PC-9 (cell line): ENCODE measurements at regions of chr14 and their contacts with region 1.

Region 1: DNA sequence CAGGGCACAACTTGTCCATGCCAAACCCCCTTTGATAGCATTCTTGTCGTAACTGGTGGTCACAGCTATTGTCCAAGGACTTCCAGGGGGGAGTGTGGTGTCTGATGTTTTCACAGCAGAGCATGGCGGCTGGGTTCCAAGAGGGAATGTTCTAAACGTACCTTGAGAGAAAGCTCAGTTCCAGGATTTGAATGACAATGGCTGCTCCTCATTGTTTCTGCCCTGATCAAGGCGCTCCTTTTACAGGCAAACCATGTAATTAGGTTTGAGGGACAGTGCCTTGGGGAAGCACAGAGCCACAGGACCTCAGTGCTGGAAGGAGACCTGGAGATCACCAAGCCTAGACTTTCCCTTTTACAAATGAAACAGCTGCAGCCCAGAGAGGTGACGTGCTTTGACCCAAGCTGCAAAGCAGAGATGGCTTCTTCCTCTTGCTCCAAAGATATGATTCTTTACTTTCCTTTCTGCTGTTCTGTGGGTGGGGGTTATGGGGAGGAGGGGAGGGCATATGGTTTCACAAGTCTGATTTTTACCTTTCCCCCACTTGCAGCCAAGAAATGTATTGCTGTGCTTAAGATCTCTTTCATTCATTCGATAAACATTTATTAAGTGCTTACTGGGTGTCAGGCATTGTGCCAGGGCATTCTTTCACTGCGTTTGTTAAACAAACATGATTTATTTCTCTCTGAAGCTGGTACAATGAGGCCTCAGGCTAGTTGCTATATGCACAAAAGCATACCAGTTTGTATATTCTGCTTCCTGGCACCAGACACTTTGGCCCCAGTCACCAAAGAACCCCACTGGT is 172.8 kb downstream of the KTN1 start:
- DNase-seq: peak; percentile 71 to 95
- H3K4me3 ChIP-seq: no peak overlapping the region
- H3K27ac ChIP-seq: peak overlapping the region; percentile 25
- H3K4me1 ChIP-seq: peaks cover 61% of the 10 kb centered on the region
- H3K27me3 ChIP-seq: no peaks in the 10 kb centered on the region
- CTCF ChIP-seq: no peak

Region 2: GRCh38 chr14:55715889-55716288 is 36.9 kb before region 1 on chr14:
- CTCF ChIA-PET with region 1: no interaction called
- POLR2A ChIA-PET with region 1: no interaction called
- intact Hi-C with region 1: no loop called
- DNase-seq: no peak
- H3K4me3 ChIP-seq: no peak overlapping the region
- H3K27ac ChIP-seq: no peak overlapping the region
- H3K4me1 ChIP-seq: peaks cover under 1% of the 10 kb centered on the region; the same call in 1 of the 2 replicates
- H3K27me3 ChIP-seq: no peaks in the 10 kb centered on the region
- CTCF ChIP-seq: no peak

Region 3: GRCh38 chr14:55807059-55807499 is 54.3 kb after region 1 on chr14:
- CTCF ChIA-PET with region 1: no interaction called
- POLR2A ChIA-PET with region 1: no interaction called
- intact Hi-C with region 1: loop called (anchors 1 kb)
- DNase-seq: peak; percentile 49 to 83
- H3K4me3 ChIP-seq: no peak overlapping the region
- H3K27ac ChIP-seq: no peak overlapping the region
- H3K4me1 ChIP-seq: peaks cover 23% of the 10 kb centered on the region
- H3K27me3 ChIP-seq: no peaks in the 10 kb centered on the region
- CTCF ChIP-seq: no peak